ENCODE measurements at regions of chr3 and their contacts with region 1.

Region 1: GRCh38 chr3:32667122-32667521 is 17.9 kb upstream of the CNOT10 start:
- DNase-seq: no peak
- H3K4me3 ChIP-seq: no peak overlapping the region
- H3K27ac ChIP-seq: no peak overlapping the region
- H3K4me1 ChIP-seq: no peaks in the 10 kb centered on the region
- H3K27me3 ChIP-seq: peaks cover 4% of the 10 kb centered on the region
- CTCF ChIP-seq: no peak

Region 2: GRCh38 chr3:32216172-32216783 is 450.8 kb before region 1 on chr3:
- CTCF ChIA-PET with region 1: no interaction called
- POLR2A ChIA-PET with region 1: no interaction called
- intact Hi-C with region 1: no loop called
- DNase-seq: no peak
- H3K4me3 ChIP-seq: no peak overlapping the region
- H3K27ac ChIP-seq: no peak overlapping the region
- H3K4me1 ChIP-seq: no peaks in the 10 kb centered on the region
- H3K27me3 ChIP-seq: no peaks in the 10 kb centered on the region
- CTCF ChIP-seq: no peak

Region 3: GRCh38 chr3:32325957-32326356 is 341.2 kb before region 1 on chr3:
- CTCF ChIA-PET with region 1: no interaction called
- POLR2A ChIA-PET with region 1: no interaction called
- intact Hi-C with region 1: no loop called
- DNase-seq: peak; percentile 23
- H3K4me3 ChIP-seq: no peak overlapping the region
- H3K27ac ChIP-seq: no peak overlapping the region
- H3K4me1 ChIP-seq: peaks cover 12% of the 10 kb centered on the region
- H3K27me3 ChIP-seq: no peaks in the 10 kb centered on the region
- CTCF ChIP-seq: no peak

Region 4: GRCh38 chr3:32374788-32375595 is 292.1 kb before region 1 on chr3:
- CTCF ChIA-PET with region 1: no interaction called
- POLR2A ChIA-PET with region 1: no interaction called
- intact Hi-C with region 1: loop called (anchors 2 kb)
- DNase-seq: peak; percentile 78
- H3K4me3 ChIP-seq: no peak overlapping the region
- H3K27ac ChIP-seq: no peak overlapping the region
- H3K4me1 ChIP-seq: no peaks in the 10 kb centered on the region
- H3K27me3 ChIP-seq: peaks cover 11% of the 10 kb centered on the region
- CTCF ChIP-seq: peak; percentile 78

Region 5: DNA sequence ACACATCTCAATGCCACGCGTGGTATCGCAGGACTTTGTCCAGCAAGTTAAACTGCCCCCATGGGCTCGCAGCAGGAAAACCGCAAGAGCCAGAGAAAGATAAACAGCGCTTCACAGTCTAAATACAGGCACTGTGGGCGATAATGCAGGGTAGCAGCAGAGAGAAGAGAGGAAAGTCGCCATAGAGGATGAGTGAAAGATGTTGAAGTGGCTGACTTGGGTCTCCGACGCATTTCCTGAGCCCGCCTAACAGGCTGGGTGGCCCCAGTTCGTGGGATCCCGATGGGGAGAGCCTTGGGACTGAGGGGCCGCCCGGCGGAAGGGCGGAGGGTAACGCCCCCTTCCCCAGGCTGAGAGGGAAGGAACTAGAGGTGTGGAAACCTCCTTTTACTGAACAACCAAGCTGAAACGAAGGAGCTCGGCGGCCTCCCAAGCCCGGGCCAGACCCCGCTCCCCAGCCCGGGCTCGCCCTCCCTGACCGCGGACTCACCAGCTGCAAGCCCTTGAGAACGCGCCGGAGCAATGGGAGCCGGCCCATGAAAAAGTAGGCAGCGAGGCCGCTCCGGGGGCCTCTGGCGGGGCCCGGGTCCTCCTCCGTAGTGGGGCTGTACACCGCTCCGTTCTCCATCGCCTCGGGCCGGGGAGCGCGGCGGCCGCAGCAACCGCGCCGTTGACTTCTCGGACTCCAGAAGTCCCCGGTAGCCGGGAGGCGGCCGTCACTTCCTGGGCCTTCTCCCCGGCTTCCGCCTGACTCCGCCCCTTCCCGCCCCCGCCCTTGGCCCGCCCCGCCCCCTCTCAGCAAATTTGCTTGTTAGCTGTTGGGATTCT is 164.8 kb before region 1 on chr3 and contains the start of gene CMTM6:
- CTCF ChIA-PET with region 1: no interaction called
- POLR2A ChIA-PET with region 1: no interaction called
- intact Hi-C with region 1: loop called (anchors 5 kb)
- DNase-seq: peak; percentile 84
- H3K4me3 ChIP-seq: peak within 1 kb of the TSS; percentile 76
- H3K27ac ChIP-seq: peak within 1 kb of the TSS; percentile 85
- H3K4me1 ChIP-seq: peaks cover 10% of the 10 kb centered on the region
- H3K27me3 ChIP-seq: no peaks in the 10 kb centered on the region
- CTCF ChIP-seq: no peak
- total RNA-seq, gene CMTM6: 30.5 and 32.3 TPM in 2 replicates

Region 6: DNA sequence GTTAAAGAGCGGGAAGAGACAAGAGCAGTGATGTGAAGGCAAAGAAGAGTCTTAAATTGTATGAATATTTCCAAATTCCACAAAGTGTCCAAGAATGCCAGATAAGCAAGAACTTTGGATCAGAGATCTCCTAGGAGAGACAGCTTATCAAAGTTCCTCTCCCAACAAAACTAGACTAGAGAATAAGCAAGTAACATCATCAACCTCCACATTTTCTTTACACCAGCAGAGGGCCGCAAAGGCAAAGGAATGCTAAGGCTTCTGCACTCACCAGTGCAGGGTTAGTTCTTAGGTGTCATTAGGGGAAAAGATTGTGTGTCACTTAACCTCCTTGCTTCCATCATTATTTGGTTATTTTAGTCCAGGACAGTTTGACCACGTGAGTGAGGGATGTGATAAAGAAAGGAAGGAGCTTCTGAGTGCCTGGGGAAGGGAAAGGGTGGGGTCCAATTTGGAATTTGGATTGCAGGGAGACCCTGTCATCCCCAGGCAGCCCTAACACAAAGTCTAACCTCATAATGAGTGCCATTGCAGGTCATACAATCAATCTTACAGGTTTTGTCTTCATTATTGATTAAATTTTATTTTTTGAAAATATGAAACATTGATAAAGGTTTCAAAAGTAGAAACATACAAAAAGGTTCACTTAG is 156.9 kb before region 1 on chr3:
- CTCF ChIA-PET with region 1: no interaction called
- POLR2A ChIA-PET with region 1: no interaction called
- intact Hi-C with region 1: loop called (anchors 1 kb)
- DNase-seq: peak; percentile 71
- H3K4me3 ChIP-seq: no peak overlapping the region
- H3K27ac ChIP-seq: no peak overlapping the region
- H3K4me1 ChIP-seq: no peaks in the 10 kb centered on the region
- H3K27me3 ChIP-seq: no peaks in the 10 kb centered on the region
- CTCF ChIP-seq: peak; percentile 75

Region 7: GRCh38 chr3:32960404-32961170 is 293.5 kb after region 1 on chr3:
- CTCF ChIA-PET with region 1: no interaction called
- POLR2A ChIA-PET with region 1: no interaction called
- intact Hi-C with region 1: no loop called
- DNase-seq: no peak
- H3K4me3 ChIP-seq: no peak overlapping the region
- H3K27ac ChIP-seq: no peak overlapping the region
- H3K4me1 ChIP-seq: no peaks in the 10 kb centered on the region
- H3K27me3 ChIP-seq: no peaks in the 10 kb centered on the region
- CTCF ChIP-seq: no peak

Region 8: DNA sequence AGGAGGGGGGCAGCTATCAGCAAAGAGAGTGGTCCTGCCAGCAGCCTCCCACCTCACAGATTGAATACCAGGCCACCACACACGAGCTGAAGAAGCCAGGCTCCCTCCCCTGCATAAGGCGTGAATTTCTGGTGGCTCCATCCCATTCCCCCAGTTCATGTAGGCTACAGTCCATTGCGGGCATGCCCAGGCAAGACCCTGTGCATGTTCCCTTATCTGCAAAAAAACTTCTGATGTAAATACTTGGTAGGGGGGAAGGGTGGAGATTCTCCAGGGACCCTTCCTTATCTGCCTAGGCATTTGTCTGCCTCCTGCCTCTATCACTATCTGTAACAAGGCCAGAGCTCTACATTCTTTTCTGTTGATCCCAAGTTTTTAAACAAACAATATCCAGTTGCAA is 800.7 kb after region 1 on chr3:
- CTCF ChIA-PET with region 1: no interaction called
- POLR2A ChIA-PET with region 1: no interaction called
- intact Hi-C with region 1: no loop called
- DNase-seq: no peak
- H3K4me3 ChIP-seq: no peak overlapping the region
- H3K27ac ChIP-seq: no peak overlapping the region
- H3K4me1 ChIP-seq: no peaks in the 10 kb centered on the region
- H3K27me3 ChIP-seq: no peaks in the 10 kb centered on the region
- CTCF ChIP-seq: no peak

Measured in A673 (cell line).